CD4-positive, alpha-beta T cell (primary cell): ENCODE measurements at regions of chr1 and their contacts with region 1.

Region 1: GRCh38 chr1:1273512-1274298 is at the start of gene UBE2J2:
- DNase-seq: peak; percentile 87 to 96 (median 92)
- ATAC-seq: peak; percentile 94
- H3K4me3 ChIP-seq: peak within 1 kb of the TSS; percentile 92
- H3K4me3 Mint-ChIP-seq: peak within 1 kb of the TSS; percentile 92
- H3K27ac ChIP-seq: peak within 1 kb of the TSS in 1 of 2 donors; percentile 29
- H3K27ac Mint-ChIP-seq: peak within 1 kb of the TSS; percentile 85
- H3K4me1 ChIP-seq: peaks cover 47% of the 10 kb centered on the region
- H3K4me1 Mint-ChIP-seq: peaks cover 34% of the 10 kb centered on the region
- H3K27me3 ChIP-seq: no peaks in the 10 kb centered on the region
- H3K27me3 Mint-ChIP-seq: no peaks in the 10 kb centered on the region
- CTCF ChIP-seq: no peak
- total RNA-seq, gene UBE2J2: 41.4 to 41.5 TPM

Region 2: DNA sequence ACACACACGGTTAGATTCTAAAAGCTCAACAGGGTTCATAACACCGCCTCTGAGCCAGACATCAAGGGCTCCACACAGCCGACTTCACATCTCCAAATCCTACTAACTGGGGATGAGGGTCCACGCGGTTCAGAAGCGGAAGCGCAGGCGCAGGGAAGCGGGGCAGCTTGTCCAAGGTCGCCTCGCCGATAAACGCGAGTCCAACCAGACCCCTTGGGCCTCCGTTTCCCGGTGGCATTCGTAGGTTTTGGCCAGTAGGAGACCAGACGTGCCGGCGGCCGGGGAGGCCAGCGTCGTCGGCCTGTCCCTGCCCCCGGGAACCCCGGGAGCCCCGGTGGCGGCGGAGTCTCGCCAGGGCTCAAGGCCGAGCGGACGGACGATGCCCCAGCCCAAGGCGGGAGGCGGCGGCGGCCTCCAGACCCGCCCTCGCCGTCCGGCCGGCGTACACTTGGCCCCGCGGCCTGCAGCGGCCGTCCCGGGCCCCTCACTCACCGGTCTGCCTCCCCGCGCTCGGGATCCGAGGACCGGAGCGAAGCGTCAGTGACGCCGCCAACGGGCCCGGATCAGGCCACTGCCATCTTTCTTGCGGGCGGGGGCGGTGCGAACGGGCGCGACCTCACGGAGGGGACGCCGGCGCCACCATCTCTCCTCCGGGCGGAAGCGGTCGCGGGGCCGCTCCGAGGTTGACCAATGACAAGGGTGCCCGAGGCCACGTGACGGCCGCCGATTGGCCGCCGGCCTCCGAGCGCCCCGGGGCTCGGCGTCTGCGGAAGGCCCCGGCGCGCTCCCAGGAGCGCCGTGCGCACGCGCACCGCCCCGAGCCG is 42.1 kb before region 1 on chr1 and contains the start of gene SDF4:
- CTCF ChIA-PET with region 1: no interaction called
- POLR2A ChIA-PET with region 1: no interaction called
- intact Hi-C with region 1: loop called in 1 of 2 experiments (anchors 1 kb)
- DNase-seq: peak; percentile 92 to 99 (median 96)
- ATAC-seq: peak; percentile 96
- H3K4me3 ChIP-seq: peak within 1 kb of the TSS; percentile 88
- H3K4me3 Mint-ChIP-seq: peak within 1 kb of the TSS; percentile 96
- H3K27ac ChIP-seq: peak within 1 kb of the TSS; percentile 44 to 87
- H3K27ac Mint-ChIP-seq: peak within 1 kb of the TSS; percentile 90
- H3K4me1 ChIP-seq: peaks cover 64% of the 10 kb centered on the region
- H3K4me1 Mint-ChIP-seq: peaks cover 23% of the 10 kb centered on the region
- H3K27me3 ChIP-seq: no peaks in the 10 kb centered on the region
- H3K27me3 Mint-ChIP-seq: no peaks in the 10 kb centered on the region
- CTCF ChIP-seq: no peak
- total RNA-seq, gene SDF4: 66.3 to 71.0 TPM

Region 3: DNA sequence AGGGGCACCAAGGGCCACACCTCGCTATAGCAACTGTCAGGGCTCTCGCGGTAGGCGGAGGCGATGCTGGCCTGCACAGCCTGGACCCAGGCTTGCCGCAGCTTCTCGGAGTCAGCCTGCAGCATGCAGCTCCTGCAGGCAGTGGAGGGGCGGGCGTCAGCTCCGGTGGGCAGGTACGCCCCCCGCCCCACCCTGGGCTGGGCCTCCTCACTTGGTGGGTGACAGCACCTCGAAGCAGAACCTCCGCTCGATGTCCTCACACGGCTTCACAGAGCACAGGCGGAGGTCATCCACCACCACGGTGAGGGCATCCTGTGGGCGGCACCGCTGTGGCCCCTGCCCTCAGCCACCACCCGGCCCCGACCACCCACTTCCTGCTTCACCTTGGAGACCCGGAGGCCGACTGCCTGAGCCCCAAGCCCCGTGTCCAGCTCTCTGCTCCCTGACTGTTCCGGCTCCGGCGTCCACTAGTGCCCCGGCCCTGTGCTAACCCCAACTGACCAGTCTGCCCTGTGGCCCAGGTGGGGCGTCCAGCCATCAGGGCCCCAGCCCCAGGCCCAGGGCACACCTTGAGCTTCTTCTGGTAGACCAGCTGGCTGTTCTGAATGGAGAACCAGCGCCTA is 24.2 kb after region 1 on chr1:
- CTCF ChIA-PET with region 1: no interaction called
- POLR2A ChIA-PET with region 1: no interaction called
- intact Hi-C with region 1: no loop called
- DNase-seq: no peak
- ATAC-seq: no peak
- H3K4me3 ChIP-seq: no peak overlapping the region
- H3K4me3 Mint-ChIP-seq: no peak overlapping the region
- H3K27ac ChIP-seq: no peak overlapping the region
- H3K27ac Mint-ChIP-seq: no peak overlapping the region
- H3K4me1 ChIP-seq: no peaks in the 10 kb centered on the region
- H3K4me1 Mint-ChIP-seq: no peaks in the 10 kb centered on the region
- H3K27me3 ChIP-seq: no peaks in the 10 kb centered on the region
- H3K27me3 Mint-ChIP-seq: no peaks in the 10 kb centered on the region
- CTCF ChIP-seq: no peak

Region 4: GRCh38 chr1:1307908-1308755 is 34.4 kb after region 1 on chr1 and contains the starts of genes ACAP3 and PUSL1:
- CTCF ChIA-PET with region 1: no interaction called
- POLR2A ChIA-PET with region 1: no interaction called
- intact Hi-C with region 1: loop called in 1 of 2 experiments (anchors 1 kb)
- DNase-seq: peak; percentile 77 to 96 (median 86)
- ATAC-seq: peak; percentile 74
- H3K4me3 ChIP-seq: peak within 1 kb of the TSS; percentile 70
- H3K4me3 Mint-ChIP-seq: peak within 1 kb of the TSS; percentile 93
- H3K27ac ChIP-seq: peak within 1 kb of the TSS; percentile 76 to 88
- H3K27ac Mint-ChIP-seq: peak within 1 kb of the TSS; percentile 87
- H3K4me1 ChIP-seq: peaks cover 46% of the 10 kb centered on the region
- H3K4me1 Mint-ChIP-seq: peaks cover 25% of the 10 kb centered on the region
- H3K27me3 ChIP-seq: no peaks in the 10 kb centered on the region
- H3K27me3 Mint-ChIP-seq: no peaks in the 10 kb centered on the region
- CTCF ChIP-seq: no peak
- total RNA-seq, gene ACAP3: 45.3 to 46.4 TPM
- total RNA-seq, gene PUSL1: 18.1 to 19.2 TPM

Region 5: GRCh38 chr1:1324521-1325287 is 51.0 kb after region 1 on chr1 and contains the starts of genes CPTP and INTS11:
- CTCF ChIA-PET with region 1: no interaction called
- POLR2A ChIA-PET with region 1: no interaction called
- intact Hi-C with region 1: loop called in 1 of 2 experiments (anchors 1 kb)
- DNase-seq: peak; percentile 93 to 98 (median 96)
- ATAC-seq: peak; percentile 84
- H3K4me3 ChIP-seq: peak within 1 kb of the TSS; percentile 69
- H3K4me3 Mint-ChIP-seq: peak within 1 kb of the TSS; percentile 93
- H3K27ac ChIP-seq: peak within 1 kb of the TSS; percentile 61 to 70
- H3K27ac Mint-ChIP-seq: peak within 1 kb of the TSS; percentile 81
- H3K4me1 ChIP-seq: peaks cover 56% of the 10 kb centered on the region
- H3K4me1 Mint-ChIP-seq: peaks cover 28% of the 10 kb centered on the region
- H3K27me3 ChIP-seq: no peaks in the 10 kb centered on the region
- H3K27me3 Mint-ChIP-seq: no peaks in the 10 kb centered on the region
- CTCF ChIP-seq: no peak
- total RNA-seq, gene CPTP: 11.6 to 12.9 TPM
- total RNA-seq, gene INTS11: 130 to 137 TPM

Region 6: DNA sequence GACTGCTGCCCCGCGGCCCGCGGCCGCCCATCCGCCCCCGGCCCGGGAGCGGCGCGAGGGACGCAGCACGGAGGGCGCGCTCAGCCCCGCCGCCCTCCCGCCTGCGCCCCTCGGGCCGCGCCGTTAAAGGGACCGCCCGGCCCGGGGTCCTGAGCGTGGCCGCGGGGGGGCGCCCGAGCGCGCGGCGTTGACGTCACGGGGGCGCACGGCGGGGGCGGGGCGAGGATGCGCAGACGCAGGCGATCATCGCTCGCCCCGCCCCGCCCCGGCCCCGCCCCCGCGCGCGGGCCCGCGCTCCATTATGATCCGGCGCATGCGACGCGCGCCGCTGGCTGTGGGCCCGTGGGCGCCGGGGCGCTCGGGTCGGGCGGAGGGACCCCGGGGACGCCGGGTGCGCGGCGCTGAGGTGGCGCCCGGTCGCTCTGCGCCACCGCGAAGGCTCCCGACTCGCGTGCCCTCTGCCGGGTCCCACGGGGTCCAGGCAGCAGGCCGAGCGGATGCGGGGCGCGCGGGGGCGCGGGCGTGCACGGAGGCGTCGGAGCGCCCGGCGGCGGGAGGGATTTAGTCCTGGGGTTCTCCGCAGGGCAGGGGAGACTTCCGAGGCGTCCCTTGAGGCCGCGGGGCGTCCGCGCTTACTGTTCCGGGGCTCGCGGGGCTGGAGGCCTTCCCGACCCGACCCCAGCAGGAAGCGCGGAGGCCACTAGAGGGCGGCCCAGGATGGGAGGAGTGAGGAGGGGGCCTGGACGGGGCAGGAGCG is 75.7 kb after region 1 on chr1 and contains the start of gene DVL1:
- CTCF ChIA-PET with region 1: no interaction called
- POLR2A ChIA-PET with region 1: no interaction called
- intact Hi-C with region 1: loop called in 1 of 2 experiments (anchors 2 kb)
- DNase-seq: peak; percentile 58 to 90 (median 70)
- ATAC-seq: peak; percentile 75
- H3K4me3 ChIP-seq: peak within 1 kb of the TSS; percentile 58
- H3K4me3 Mint-ChIP-seq: peak within 1 kb of the TSS; percentile 86
- H3K27ac ChIP-seq: peak within 1 kb of the TSS in 1 of 2 donors; percentile 53
- H3K27ac Mint-ChIP-seq: no peak within 1 kb of the TSS
- H3K4me1 ChIP-seq: peaks cover 58% of the 10 kb centered on the region
- H3K4me1 Mint-ChIP-seq: peaks cover 36% of the 10 kb centered on the region
- H3K27me3 ChIP-seq: peaks cover 14 to 19% of the 10 kb centered on the region in 2 experiments
- H3K27me3 Mint-ChIP-seq: peaks cover 21% of the 10 kb centered on the region
- CTCF ChIP-seq: peak; percentile 27
- total RNA-seq, gene DVL1: 44.9 to 45.5 TPM

Region 7: DNA sequence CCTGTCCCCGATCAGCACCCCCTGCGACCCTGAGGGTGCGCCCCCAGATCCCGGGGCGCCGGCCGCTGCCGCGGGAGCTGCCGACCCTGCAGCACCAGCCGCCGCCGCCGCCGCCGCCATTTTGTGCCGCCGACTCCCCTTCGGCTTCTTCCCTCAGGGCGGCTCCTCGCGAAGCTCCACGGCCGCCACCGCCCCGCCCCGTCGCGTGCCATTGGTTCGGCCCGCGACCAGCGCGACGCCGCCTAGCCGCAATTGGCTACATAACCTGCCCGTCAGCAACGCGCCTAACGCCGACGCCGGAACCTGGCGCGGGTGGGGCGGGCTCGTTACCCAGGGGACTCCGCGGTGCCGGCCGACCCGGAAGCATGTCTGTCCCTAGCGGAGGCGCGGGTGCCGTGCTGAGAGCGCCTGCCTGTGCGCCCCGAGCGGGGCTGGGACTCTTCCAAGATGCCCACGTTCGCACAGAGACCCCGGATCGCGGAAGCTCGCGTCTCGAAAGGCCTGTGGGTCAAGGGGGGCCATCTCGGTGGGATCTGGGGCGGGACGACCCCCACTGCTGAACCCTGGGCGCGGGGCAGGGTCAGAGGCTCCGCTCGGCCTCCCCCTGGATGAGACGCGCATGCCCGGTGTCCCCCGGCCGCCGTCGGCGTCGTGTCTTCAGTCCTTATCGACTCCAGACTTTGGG is 125.6 kb after region 1 on chr1 and contains the start of gene CCNL2:
- CTCF ChIA-PET with region 1: no interaction called
- POLR2A ChIA-PET with region 1: interaction called, 3 read pairs
- intact Hi-C with region 1: loop called in 1 of 2 experiments (anchors 5 kb)
- DNase-seq: peak; percentile 98 to 100 (median 99)
- ATAC-seq: peak; percentile 95
- H3K4me3 ChIP-seq: peak within 1 kb of the TSS; percentile 99
- H3K4me3 Mint-ChIP-seq: peak within 1 kb of the TSS; percentile 92
- H3K27ac ChIP-seq: peak within 1 kb of the TSS; percentile 81 to 89
- H3K27ac Mint-ChIP-seq: peak within 1 kb of the TSS; percentile 86
- H3K4me1 ChIP-seq: peaks cover 47% of the 10 kb centered on the region
- H3K4me1 Mint-ChIP-seq: peaks cover 53% of the 10 kb centered on the region
- H3K27me3 ChIP-seq: no peaks in the 10 kb centered on the region
- H3K27me3 Mint-ChIP-seq: no peaks in the 10 kb centered on the region
- CTCF ChIP-seq: peak; percentile 45
- total RNA-seq, gene CCNL2: 274 to 281 TPM

Region 8: DNA sequence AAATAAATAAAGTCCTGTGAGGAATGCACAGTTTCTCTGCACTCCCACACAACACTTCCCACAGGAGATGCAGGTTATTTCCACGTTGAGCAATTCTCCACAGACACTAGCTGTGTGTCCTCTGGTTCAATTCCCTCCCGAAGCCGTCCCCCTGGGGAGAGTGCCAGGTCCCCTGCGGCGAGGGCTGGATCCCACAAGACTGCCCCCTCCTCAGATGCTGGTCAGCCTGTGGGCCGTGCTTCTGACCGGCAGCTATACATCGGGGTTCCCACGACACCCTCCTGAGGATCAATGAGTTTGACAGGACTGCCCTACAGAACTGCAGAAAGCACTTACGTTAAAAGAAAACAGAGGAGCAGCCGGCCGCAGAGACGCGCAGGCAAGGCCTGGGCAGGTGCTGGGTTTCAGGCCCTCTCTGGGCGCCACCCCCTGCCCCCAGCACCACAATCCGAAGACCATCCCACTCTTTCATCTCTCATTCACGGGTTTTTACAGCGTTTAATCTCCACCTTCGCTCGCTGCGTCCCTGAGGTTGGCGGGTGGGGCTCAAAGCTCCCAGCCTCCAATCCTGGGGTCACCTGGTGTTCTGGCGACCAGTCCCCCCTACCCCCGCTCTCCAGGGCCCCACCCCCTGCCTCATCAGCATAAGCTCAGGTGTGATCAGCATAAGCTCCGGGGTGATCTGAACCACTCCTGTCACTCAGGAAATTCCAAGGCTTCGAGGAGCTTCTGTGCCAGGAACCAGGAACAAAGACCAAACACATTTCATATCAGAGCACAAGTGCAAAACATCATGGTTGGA is 409.6 kb after region 1 on chr1:
- CTCF ChIA-PET with region 1: no interaction called
- POLR2A ChIA-PET with region 1: no interaction called
- intact Hi-C with region 1: no loop called
- DNase-seq: no peak
- ATAC-seq: no peak
- H3K4me3 ChIP-seq: no peak overlapping the region
- H3K4me3 Mint-ChIP-seq: peak overlapping the region; percentile 30
- H3K27ac ChIP-seq: no peak overlapping the region
- H3K27ac Mint-ChIP-seq: no peak overlapping the region
- H3K4me1 ChIP-seq: peaks cover 28% of the 10 kb centered on the region
- H3K4me1 Mint-ChIP-seq: peaks cover 18% of the 10 kb centered on the region
- H3K27me3 ChIP-seq: no peaks in the 10 kb centered on the region
- H3K27me3 Mint-ChIP-seq: no peaks in the 10 kb centered on the region
- CTCF ChIP-seq: no peak

Region 9: DNA sequence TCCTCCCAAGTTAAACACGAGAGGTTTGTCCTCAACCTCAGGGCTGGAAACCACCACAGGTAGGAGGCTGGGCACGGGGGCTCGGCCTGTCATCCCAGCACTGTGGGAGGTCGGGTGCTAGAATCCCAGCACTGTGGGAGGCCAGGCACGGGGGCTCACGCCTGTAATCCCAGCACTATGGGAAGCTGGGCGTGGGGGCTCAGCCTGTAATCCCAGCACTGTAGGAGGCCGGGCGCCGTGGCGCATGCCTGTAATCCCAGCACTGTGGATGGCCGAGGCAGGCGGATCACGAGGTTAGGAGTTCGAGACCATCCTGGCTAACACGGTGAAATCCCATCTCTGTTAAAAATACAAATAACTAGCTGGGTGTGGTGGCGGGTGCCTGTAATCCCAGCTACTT is 457.2 kb after region 1 on chr1:
- CTCF ChIA-PET with region 1: no interaction called
- POLR2A ChIA-PET with region 1: no interaction called
- intact Hi-C with region 1: no loop called
- DNase-seq: peak in 1 of 14 experiments; percentile 26
- ATAC-seq: no peak
- H3K4me3 ChIP-seq: no peak overlapping the region
- H3K4me3 Mint-ChIP-seq: no peak overlapping the region
- H3K27ac ChIP-seq: peak overlapping the region in 1 of 2 donors; percentile 22
- H3K27ac Mint-ChIP-seq: no peak overlapping the region
- H3K4me1 ChIP-seq: peaks cover 32% of the 10 kb centered on the region
- H3K4me1 Mint-ChIP-seq: peaks cover 9% of the 10 kb centered on the region
- H3K27me3 ChIP-seq: no peaks in the 10 kb centered on the region
- H3K27me3 Mint-ChIP-seq: no peaks in the 10 kb centered on the region
- CTCF ChIP-seq: no peak

Region 10: GRCh38 chr1:3012456-3013291 is 1739.0 kb after region 1 on chr1:
- CTCF ChIA-PET with region 1: no interaction called
- POLR2A ChIA-PET with region 1: no interaction called
- intact Hi-C with region 1: no loop called
- DNase-seq: peak in 13 of 14 experiments; percentile 27 to 71 (median 46)
- ATAC-seq: peak; percentile 54
- H3K4me3 ChIP-seq: no peak overlapping the region
- H3K4me3 Mint-ChIP-seq: no peak overlapping the region
- H3K27ac ChIP-seq: no peak overlapping the region
- H3K27ac Mint-ChIP-seq: no peak overlapping the region
- H3K4me1 ChIP-seq: peaks cover 6% of the 10 kb centered on the region
- H3K4me1 Mint-ChIP-seq: no peaks in the 10 kb centered on the region
- H3K27me3 ChIP-seq: peaks cover 0 to 8% of the 10 kb centered on the region in 2 experiments
- H3K27me3 Mint-ChIP-seq: peaks cover 19% of the 10 kb centered on the region
- CTCF ChIP-seq: peak; percentile 84